ENCODE measurements at regions of chr6 and their contacts with region 1.

Region 1: DNA sequence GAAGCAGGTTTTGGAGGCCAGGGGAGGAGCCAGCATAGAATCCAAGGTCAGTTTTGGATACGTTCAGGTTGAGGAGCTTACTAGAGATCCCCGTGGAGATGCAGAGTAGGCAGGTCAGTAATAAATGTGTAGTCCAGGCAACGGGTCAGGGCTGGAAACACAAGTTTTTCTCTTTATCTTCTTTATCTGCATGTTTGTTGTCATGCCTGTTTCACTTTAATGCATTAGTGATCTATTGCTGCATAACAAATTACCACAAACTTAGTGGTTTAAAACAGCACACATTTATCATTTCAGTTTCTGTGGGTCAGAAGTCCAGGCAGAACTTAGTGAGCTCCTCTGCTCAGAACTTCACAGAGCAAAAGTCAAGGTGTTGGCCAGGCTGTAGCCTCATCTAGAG is 5.8 kb upstream of the BTN3A1 start:
- DNase-seq: no peak
- H3K4me3 ChIP-seq: no peak overlapping the region
- H3K27ac ChIP-seq: no peak overlapping the region
- H3K4me1 ChIP-seq: no peaks in the 10 kb centered on the region
- H3K27me3 ChIP-seq: no peaks in the 10 kb centered on the region
- CTCF ChIP-seq: no peak
- EP300 ChIP-seq: no peak
- POLR2A ChIP-seq: no peak
- RAD21 ChIP-seq: no peak

Region 2: GRCh38 chr6:26322645-26323482 is 73.4 kb before region 1 on chr6:
- CTCF ChIA-PET with region 1: no interaction called
- POLR2A ChIA-PET with region 1: no interaction called
- DNase-seq: peak in 1 of 2 experiments; percentile 81
- H3K4me3 ChIP-seq: peak overlapping the region; percentile 70 to 89 (median 78)
- H3K27ac ChIP-seq: no peak overlapping the region
- H3K4me1 ChIP-seq: peaks cover 0 to 5% (median 2%) of the 10 kb centered on the region in 4 experiments; a peak in 3 of 7 replicates
- H3K27me3 ChIP-seq: peaks cover 0 to 4% (median 0%) of the 10 kb centered on the region in 4 experiments; a peak in 1 of 7 replicates
- CTCF ChIP-seq: no peak
- EP300 ChIP-seq: no peak
- POLR2A ChIP-seq: no peak
- RAD21 ChIP-seq: no peak

Region 3: DNA sequence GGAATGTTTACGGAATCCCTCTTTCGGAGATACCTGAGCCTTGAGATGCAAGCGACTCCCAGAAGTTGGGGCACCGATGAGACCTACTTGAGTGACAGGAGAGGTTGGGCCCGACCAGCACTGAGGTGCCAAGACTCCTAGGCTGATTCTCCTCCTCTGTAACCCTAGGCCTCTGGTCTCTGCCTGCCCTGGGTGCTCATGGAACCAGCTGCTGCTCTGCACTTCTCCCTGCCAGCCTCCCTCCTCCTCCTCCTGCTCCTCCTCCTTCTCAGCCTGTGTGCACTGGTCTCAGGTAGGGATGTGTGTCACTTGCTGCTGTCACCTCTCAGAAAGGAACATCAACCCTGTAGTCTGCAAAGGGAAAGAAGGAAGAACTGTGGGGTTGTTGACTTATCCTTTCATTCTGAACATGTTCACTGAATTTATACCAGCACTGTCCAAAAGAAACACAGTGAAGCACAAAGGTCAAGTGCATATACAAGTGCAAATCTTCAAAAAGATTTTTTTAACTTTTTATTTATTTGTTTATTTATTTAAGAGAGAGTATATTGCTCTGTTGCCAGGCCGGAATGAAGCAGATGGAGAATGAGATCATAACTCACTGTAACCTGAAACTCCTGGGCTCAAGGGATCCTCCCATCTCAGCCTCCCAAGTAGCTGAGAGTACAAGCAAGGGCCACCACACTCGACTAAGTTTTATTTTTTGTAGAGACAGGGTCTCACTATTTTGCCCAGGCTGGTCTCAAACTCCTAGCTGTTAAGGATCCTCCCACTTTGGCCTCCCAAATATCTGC is 12.5 kb before region 1 on chr6:
- CTCF ChIA-PET with region 1: interaction called, 3 read pairs
- POLR2A ChIA-PET with region 1: interaction called, 10 read pairs
- DNase-seq: peak in 1 of 2 experiments; percentile 57
- H3K4me3 ChIP-seq: peak overlapping the region; percentile 82 to 94 (median 92)
- H3K27ac ChIP-seq: peak overlapping the region; percentile 27; the same call in 1 of the 2 replicates
- H3K4me1 ChIP-seq: peaks cover 0 to 8% (median 7%) of the 10 kb centered on the region in 4 experiments; a peak in 6 of 7 replicates
- H3K27me3 ChIP-seq: no peaks in the 10 kb centered on the region
- CTCF ChIP-seq: no peak
- EP300 ChIP-seq: no peak
- POLR2A ChIP-seq: peak in 1 of 2 experiments; percentile 57; a peak in 1 of 3 replicates
- RAD21 ChIP-seq: no peak

Region 4: GRCh38 chr6:26537846-26538571 is 141.7 kb after region 1 on chr6 and contains the start of gene HMGN4:
- CTCF ChIA-PET with region 1: no interaction called
- POLR2A ChIA-PET with region 1: no interaction called
- DNase-seq: peak in 1 of 2 experiments; percentile 87
- H3K4me3 ChIP-seq: peak within 1 kb of the TSS; percentile 73 to 87 (median 80)
- H3K27ac ChIP-seq: peak within 1 kb of the TSS; percentile 84
- H3K4me1 ChIP-seq: peaks cover 0 to 4% (median 3%) of the 10 kb centered on the region in 4 experiments; a peak in 5 of 7 replicates
- H3K27me3 ChIP-seq: no peaks in the 10 kb centered on the region
- CTCF ChIP-seq: no peak
- EP300 ChIP-seq: no peak
- POLR2A ChIP-seq: peak in 1 of 2 experiments; percentile 65; a peak in 1 of 3 replicates
- RAD21 ChIP-seq: no peak
- total RNA-seq, gene HMGN4: 61.9 and 66.4 TPM in 2 replicates

Measured in H1 (cell line).